Calu3 (cell line): ENCODE measurements at regions of chr1 and their contacts with region 1.

Region 1: DNA sequence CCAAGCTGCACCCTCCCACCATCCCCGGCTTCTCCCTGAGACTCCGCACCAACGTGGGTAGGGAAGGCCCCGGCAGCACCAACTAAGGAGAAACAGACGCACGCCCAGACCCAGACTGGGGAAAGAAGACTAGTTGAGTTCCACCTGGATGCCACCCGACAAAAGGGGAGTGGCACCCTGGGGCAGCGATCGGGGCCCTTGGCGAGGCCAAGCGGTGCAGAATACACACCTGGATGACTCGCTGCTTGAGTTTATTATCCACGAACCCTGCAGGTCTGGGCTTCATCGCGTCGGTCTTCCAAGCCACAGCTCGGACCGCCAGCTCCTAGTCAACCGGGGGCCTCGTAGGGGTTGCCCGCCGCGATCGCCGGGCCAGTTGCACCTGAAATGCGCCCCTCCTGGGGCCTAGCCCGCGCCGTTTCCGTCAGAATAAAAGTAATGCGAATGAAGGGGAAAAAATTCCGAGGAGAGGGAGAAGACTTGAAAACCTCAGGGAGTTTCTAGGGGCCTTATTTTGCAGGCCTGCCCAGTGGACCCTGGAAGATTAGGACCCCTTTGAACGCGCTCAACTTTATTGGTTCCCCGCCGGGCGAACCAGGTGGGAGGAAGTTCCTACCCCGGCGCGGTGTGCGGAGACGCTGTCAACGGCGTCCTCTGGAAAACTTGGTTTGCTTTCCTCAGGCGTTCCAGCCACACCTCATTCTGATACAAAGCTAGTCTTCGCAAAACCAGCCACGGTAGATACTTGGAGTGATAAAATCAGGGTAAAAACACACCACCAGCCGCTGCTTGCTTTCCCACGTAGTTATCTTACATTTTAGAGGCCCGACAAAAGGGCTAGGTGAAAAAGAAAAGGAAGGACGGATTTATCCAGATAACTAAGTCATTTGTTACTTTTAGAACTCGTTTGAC is at the start of gene NVL:
- DNase-seq: peak; percentile 89
- H3K4me3 Mint-ChIP-seq: peak within 1 kb of the TSS; percentile 95
- H3K27ac Mint-ChIP-seq: peak within 1 kb of the TSS; percentile 99
- H3K4me1 Mint-ChIP-seq: peaks cover 30% of the 10 kb centered on the region
- H3K27me3 Mint-ChIP-seq: no peaks in the 10 kb centered on the region
- CTCF ChIP-seq: no peak
- total RNA-seq, gene NVL: 39.2 and 43.4 TPM in 2 replicates

Region 2: GRCh38 chr1:223700942-223701637 is 629.0 kb before region 1 on chr1:
- CTCF ChIA-PET with region 1: no interaction called
- intact Hi-C with region 1: loop called (anchors 2 kb)
- DNase-seq: peak; percentile 86
- H3K4me3 Mint-ChIP-seq: peak overlapping the region; percentile 51
- H3K27ac Mint-ChIP-seq: peak overlapping the region; percentile 90
- H3K4me1 Mint-ChIP-seq: peaks cover 61% of the 10 kb centered on the region
- H3K27me3 Mint-ChIP-seq: no peaks in the 10 kb centered on the region
- CTCF ChIP-seq: no peak

Region 3: GRCh38 chr1:224116131-224116530 is 214.0 kb before region 1 on chr1:
- CTCF ChIA-PET with region 1: interaction called, 3 read pairs
- intact Hi-C with region 1: loop called (anchors 1 kb)
- DNase-seq: no peak
- H3K4me3 Mint-ChIP-seq: peak overlapping the region; percentile 84
- H3K27ac Mint-ChIP-seq: peak overlapping the region; percentile 42
- H3K4me1 Mint-ChIP-seq: peaks cover 24% of the 10 kb centered on the region
- H3K27me3 Mint-ChIP-seq: no peaks in the 10 kb centered on the region
- CTCF ChIP-seq: peak; percentile 34

Region 4: DNA sequence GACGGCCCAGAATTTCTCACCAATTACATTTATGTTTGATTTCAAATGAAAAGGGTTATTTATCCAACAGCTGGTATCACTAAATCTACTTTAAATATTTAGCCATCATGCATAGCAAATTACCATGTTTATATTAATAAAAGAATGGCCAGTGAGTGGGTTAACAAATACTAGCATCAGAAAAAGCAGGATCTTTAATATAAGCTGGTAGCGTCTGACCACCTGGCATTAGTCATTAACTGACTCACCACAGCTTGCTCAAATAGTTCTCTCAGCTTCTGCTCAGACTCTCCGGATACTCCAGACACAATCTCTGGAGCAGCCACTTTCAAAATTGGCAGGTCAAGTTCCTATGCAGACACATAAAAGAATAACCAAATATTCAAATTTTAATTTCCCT is 29.8 kb before region 1 on chr1:
- CTCF ChIA-PET with region 1: no interaction called
- intact Hi-C with region 1: loop called (anchors 1 kb)
- DNase-seq: peak; percentile 19
- H3K4me3 Mint-ChIP-seq: no peak overlapping the region
- H3K27ac Mint-ChIP-seq: no peak overlapping the region
- H3K4me1 Mint-ChIP-seq: peaks cover 7% of the 10 kb centered on the region
- H3K27me3 Mint-ChIP-seq: no peaks in the 10 kb centered on the region
- CTCF ChIP-seq: no peak